ENCODE measurements at regions of chr1 and their contacts with region 1.

Region 1: GRCh38 chr1:87953732-87954344 is 625.2 kb downstream of the LMO4 start:
- DNase-seq: peak; percentile 74
- H3K4me3 ChIP-seq: no peak overlapping the region
- H3K27ac ChIP-seq: no peak overlapping the region
- H3K27me3 ChIP-seq: no peaks in the 10 kb centered on the region
- CTCF ChIP-seq: peak; percentile 90

Region 2: GRCh38 chr1:87131809-87132283 is 822.0 kb before region 1 on chr1:
- in situ Hi-C with region 1: loop called (anchors 25 kb)
- DNase-seq: peak; percentile 47
- H3K4me3 ChIP-seq: peak overlapping the region; percentile 58
- H3K27ac ChIP-seq: no peak overlapping the region
- H3K27me3 ChIP-seq: no peaks in the 10 kb centered on the region
- CTCF ChIP-seq: peak; percentile 93

Region 3: DNA sequence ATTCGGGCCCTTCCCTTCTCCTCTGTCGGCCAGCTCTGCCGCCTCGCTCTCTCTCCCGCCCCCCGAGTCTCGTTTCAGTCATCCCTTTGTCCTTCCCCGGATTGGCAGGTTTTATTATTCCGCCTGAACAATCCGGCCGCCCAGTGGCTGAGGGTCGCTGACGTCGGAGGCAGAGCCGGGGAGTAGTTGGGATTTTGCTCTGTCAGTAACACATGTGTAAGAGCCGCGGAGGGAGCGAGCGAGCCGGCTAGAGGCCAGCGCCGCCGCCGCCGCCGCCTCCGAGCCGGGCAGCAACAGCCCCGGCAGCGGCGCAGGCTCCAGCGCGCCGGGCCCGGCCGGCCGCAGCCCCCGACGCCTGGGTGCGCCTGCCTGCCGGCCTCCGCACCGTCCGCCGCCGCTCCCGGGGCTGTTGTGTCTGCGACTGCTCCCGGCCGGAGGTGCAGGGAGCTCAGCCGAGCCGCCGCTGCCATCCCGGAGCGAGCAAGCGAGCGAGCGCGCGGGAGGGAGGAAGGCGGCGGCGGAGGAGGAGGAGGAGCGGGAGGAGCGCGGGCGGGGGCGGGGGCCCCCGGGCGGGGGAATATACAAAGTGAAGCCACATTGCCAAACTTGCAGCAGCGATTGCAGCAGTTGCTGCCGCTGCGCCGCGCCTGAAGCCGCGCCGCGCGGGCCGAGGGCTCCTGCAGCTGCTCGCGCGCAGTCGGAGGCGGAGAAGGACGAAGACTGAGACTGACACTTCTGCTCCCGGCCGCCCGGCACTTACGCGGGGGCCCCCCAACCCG is 625.4 kb before region 1 on chr1 and contains the start of gene LMO4:
- in situ Hi-C with region 1: loop called (anchors 25 kb)
- DNase-seq: peak; percentile 98
- H3K4me3 ChIP-seq: peak within 1 kb of the TSS; percentile 79
- H3K27ac ChIP-seq: peak within 1 kb of the TSS; percentile 65
- H3K27me3 ChIP-seq: no peaks in the 10 kb centered on the region
- CTCF ChIP-seq: no peak

Region 4: GRCh38 chr1:87864676-87865075 is 89.2 kb before region 1 on chr1:
- in situ Hi-C with region 1: no loop called
- DNase-seq: no peak
- H3K4me3 ChIP-seq: no peak overlapping the region
- H3K27ac ChIP-seq: no peak overlapping the region
- H3K27me3 ChIP-seq: no peaks in the 10 kb centered on the region
- CTCF ChIP-seq: no peak